Pancreas (tissue), 10 donors: ENCODE measurements at regions of chr6 and their contacts with region 1.

Region 1: DNA sequence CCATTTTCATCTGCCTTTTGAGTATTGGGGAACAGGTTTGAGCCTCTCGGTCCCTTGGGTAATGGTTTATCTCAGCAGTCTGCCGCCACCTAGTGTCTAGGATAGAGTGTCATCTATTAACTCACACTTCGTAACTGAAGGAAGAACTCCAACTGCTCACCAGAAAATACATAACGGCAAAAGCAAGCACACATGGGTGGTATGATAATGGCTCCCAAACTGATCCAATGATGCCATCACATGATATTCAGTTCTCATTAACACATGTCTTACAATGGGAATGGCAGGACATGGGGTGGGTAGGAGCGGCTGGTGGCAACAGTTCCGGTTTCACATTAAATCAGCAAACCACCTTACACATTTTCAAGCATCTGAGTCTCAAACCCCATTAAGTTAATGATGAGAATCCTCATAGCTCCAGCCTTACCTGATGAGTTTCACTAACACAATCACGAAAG is 110.7 kb upstream of the PHACTR1 start:
- DNase-seq: peak in 3 of 6 donors; percentile 34 to 53 (median 51)
- ATAC-seq: peak; percentile 83 to 94 (median 90)
- H3K4me3 ChIP-seq: no peak overlapping the region
- H3K27ac ChIP-seq: no peak overlapping the region
- H3K4me1 ChIP-seq: no peaks in the 10 kb centered on the region
- H3K27me3 ChIP-seq: no peaks in the 10 kb centered on the region
- CTCF ChIP-seq: peak; percentile 19 to 57 (median 54)

Region 2: GRCh38 chr6:11653028-11653583 is 952.8 kb before region 1 on chr6:
- intact Hi-C with region 1: loop called in 1 of 3 experiments (anchors 10 kb)
- DNase-seq: no peak
- ATAC-seq: peak in 2 of 4 donors; percentile 46 to 63
- H3K4me3 ChIP-seq: no peak overlapping the region
- H3K27ac ChIP-seq: no peak overlapping the region
- H3K4me1 ChIP-seq: no peaks in the 10 kb centered on the region
- H3K27me3 ChIP-seq: no peaks in the 10 kb centered on the region
- CTCF ChIP-seq: no peak

Region 3: DNA sequence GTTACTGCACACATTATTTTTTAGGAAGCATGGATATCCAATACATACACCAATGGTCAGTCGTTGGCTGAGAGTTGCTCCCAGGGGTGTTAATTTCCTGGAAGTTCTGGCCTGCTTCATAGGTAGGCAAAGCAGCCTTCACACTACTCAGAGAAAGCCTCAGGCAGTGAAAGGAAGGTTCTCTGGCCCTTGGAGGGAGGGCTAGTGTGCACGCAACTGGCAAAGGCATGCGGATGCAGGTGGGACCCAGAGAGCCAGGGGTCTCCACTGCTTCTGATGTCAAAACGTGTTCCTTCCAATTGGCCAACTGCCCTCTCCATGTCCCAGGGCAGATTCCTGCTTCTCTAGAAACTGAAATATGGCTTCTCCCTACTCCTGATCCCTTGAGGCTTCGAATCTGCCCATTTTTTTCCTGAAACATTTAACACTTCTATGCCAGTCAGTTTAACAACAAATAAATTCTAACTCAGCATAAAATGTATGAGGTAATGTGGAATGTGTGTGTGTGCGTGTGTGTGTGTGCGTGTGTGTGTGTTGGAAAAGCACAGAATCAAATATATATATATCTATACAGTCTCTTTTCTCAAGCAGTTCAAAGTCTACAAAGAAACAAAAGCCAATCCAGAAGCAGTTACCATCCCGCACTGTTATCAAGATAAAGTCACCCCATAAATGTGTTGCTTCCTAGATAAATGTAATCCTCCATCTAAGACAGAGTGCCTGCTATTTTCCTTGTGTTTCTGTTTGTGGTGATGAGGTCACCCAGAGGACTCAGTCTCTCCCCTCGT is 687.8 kb before region 1 on chr6:
- intact Hi-C with region 1: no loop called
- DNase-seq: no peak
- ATAC-seq: peak in 2 of 4 donors; percentile 24 to 74
- H3K4me3 ChIP-seq: no peak overlapping the region
- H3K27ac ChIP-seq: no peak overlapping the region
- H3K4me1 ChIP-seq: no peaks in the 10 kb centered on the region
- H3K27me3 ChIP-seq: no peaks in the 10 kb centered on the region
- CTCF ChIP-seq: no peak

Region 4: DNA sequence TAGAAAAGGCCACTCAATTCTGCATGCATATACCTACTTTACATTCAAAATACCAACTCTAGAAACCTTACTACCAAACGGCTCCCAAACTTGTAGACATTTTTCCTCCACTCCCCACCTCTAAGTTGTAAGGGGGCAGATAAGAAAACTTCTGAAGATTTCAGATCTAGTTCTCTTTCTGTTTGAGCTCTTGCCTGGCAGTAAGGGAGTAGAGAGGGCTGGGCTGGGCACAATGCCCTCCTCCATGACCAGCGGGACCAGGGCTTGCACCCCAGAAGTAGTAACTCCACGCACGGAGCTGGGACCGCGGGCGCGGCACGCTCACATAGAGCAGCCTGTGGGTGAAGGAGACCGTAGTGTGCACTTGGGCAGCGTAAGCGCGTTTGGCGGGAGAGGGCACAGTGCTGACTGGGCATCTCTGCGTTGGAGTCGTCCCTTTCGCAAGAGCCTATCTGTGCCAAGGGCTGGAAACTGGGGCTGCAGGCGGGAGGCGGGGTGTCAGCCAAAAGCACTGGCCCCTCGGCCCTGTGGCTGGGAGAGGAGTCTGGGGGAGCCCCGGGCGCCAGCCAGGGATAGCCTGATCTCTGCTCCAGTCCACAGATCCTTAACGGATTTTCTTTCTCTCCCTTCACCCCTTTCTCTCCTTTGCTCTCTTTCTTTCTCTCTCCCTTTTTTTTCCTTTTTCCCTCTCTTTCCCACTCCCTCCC is 143.1 kb after region 1 on chr6:
- intact Hi-C with region 1: no loop called
- DNase-seq: peak in 2 of 6 donors; percentile 50 to 55
- ATAC-seq: peak in 2 of 4 donors; percentile 43 to 66
- H3K4me3 ChIP-seq: no peak overlapping the region
- H3K27ac ChIP-seq: no peak overlapping the region
- H3K4me1 ChIP-seq: no peaks in the 10 kb centered on the region
- H3K27me3 ChIP-seq: peaks cover 0 to 10% (median 0%) of the 10 kb centered on the region in 4 donors
- CTCF ChIP-seq: no peak

Region 5: DNA sequence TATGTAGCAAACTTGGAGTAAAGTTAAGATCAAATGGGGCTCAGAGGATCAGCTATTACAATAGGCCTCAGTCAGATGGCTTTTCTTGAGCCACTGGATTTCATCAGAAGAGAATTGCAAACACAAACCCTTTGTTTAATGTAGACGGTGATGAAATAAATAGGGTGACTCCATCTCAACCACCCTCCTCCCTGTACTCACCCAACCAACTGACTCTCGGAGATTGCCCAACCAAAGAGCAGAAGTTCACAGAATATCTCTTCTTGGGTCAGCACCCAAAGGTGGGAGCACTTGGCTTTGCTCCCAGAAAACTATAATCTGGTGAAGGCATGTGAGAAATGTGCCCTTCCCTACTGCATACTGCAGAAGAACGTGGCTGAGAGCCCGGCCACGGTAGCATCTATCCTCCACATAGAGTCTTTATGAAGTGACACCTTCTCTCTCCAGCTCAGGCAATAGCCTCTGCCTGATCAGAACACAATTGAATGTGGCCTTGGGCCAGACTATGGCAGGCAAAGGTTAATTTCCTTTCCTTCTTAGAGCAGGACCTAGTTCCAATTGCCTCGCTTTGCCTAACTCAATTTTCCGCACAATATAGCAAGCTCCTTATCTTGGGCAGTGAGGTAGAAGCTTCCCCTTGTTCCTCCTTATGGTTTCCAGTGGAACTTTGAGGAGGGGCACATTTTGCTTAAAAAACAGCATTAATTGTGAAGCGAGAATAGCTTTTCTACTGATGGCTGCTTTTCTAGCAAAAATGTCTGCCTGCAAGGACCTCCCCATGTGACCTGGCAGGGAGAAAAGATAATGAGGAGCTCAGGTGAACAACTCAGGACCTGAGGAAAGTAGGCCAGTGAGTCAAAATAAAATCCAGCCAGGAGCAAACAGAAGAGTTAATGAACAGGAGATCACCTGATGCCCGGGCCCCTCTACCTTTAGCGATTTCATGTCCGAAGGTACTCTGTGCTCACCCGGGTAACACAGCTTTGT is 802.1 kb after region 1 on chr6:
- intact Hi-C with region 1: no loop called
- DNase-seq: peak in 3 of 6 donors; percentile 22 to 48 (median 30)
- ATAC-seq: peak; percentile 50 to 83 (median 70)
- H3K4me3 ChIP-seq: no peak overlapping the region
- H3K27ac ChIP-seq: peak overlapping the region in 2 of 4 donors; percentile 27 to 42
- H3K4me1 ChIP-seq: peaks cover 3 to 8% (median 6%) of the 10 kb centered on the region in 3 donors
- H3K27me3 ChIP-seq: no peaks in the 10 kb centered on the region
- CTCF ChIP-seq: no peak